Colonic mucosa (tissue), 4 donors: ENCODE measurements at regions of chr5 and their contacts with region 1.

Region 1: DNA sequence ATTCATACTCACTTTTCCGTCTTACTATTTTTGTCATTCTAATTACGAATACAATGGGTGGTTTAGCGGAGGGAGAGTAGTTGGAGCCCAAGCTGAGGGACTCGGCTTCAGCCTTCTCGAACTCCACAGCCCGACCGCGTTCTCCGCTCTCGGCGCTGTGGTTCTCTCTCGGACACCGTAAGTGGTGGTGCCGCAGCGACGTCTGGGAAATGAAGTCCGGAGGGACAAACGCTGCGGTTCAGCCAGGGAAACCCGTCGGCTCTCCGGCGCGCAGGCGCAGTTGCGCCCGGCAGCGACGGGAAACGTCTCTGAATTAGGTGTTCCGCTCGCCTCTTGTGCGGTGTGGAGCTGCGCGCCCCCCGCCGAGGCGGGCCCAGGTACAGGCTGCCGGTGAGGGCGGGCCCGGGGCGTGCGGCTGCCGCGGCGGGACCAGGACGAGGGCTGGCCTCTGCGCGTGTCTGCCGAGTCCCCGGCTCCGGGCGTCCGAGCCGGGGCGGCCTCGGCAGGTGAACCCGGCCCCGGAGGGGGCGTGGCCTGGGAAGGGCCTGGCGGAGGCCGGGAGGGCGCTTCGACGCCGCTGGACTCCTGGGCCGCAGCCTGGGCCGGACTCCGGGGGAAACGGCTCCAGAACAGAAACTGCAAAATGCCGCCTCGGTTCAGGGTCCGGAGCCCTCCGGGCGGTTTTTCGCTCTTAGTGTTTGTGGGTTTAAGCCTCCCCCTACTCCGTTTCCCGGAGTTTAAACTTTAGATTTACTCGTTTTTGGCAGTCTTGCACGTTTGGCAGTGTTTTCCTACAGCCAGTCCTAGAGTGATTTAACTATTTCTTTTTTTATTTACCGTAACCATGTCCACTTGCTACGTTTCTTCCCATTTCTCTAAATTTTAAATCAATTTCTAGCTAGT is at the start of gene ZNF879:
- DNase-seq: peak; percentile 97
- H3K4me3 ChIP-seq: peak within 1 kb of the TSS; percentile 77
- H3K27ac ChIP-seq: peak within 1 kb of the TSS; percentile 80
- H3K4me1 ChIP-seq: no peaks in the 10 kb centered on the region
- H3K27me3 ChIP-seq: no peaks in the 10 kb centered on the region
- CTCF ChIP-seq: no peak
- total RNA-seq, gene ZNF879: 1.8 to 2.7 TPM

Region 2: GRCh38 chr5:178838695-178839685 is 184.8 kb before region 1 on chr5:
- intact Hi-C with region 1: no loop called
- DNase-seq: peak; percentile 62
- H3K4me3 ChIP-seq: no peak overlapping the region
- H3K27ac ChIP-seq: no peak overlapping the region
- H3K4me1 ChIP-seq: no peaks in the 10 kb centered on the region
- H3K27me3 ChIP-seq: no peaks in the 10 kb centered on the region
- CTCF ChIP-seq: peak; percentile 46

Region 3: GRCh38 chr5:179060116-179061008 is 36.6 kb after region 1 on chr5 and contains the start of gene ZNF354C:
- intact Hi-C with region 1: loop called (anchors 2 kb)
- DNase-seq: peak; percentile 89
- H3K4me3 ChIP-seq: peak within 1 kb of the TSS; percentile 67
- H3K27ac ChIP-seq: peak within 1 kb of the TSS; percentile 7
- H3K4me1 ChIP-seq: no peaks in the 10 kb centered on the region
- H3K27me3 ChIP-seq: no peaks in the 10 kb centered on the region
- CTCF ChIP-seq: no peak
- total RNA-seq, gene ZNF354C: 1.7 to 1.9 TPM